ENCODE measurements at regions of chr14 and their contacts with region 1.

Region 1: GRCh38 chr14:38721822-38722431 is 381.1 kb downstream of the SEC23A start:
- DNase-seq: peak; percentile 81
- H3K4me3 Mint-ChIP-seq: no peak overlapping the region
- H3K27ac Mint-ChIP-seq: no peak overlapping the region
- H3K4me1 Mint-ChIP-seq: no peaks in the 10 kb centered on the region
- H3K27me3 Mint-ChIP-seq: no peaks in the 10 kb centered on the region

Region 2: GRCh38 chr14:36941783-36942521 is 1780.0 kb before region 1 on chr14:
- intact Hi-C with region 1: no loop called
- DNase-seq: peak; percentile 83
- H3K4me3 Mint-ChIP-seq: no peak overlapping the region
- H3K27ac Mint-ChIP-seq: no peak overlapping the region
- H3K4me1 Mint-ChIP-seq: no peaks in the 10 kb centered on the region
- H3K27me3 Mint-ChIP-seq: no peaks in the 10 kb centered on the region

Region 3: GRCh38 chr14:38867561-38868150 is 145.7 kb after region 1 on chr14:
- intact Hi-C with region 1: loop called (anchors 1 kb)
- DNase-seq: peak; percentile 84
- H3K4me3 Mint-ChIP-seq: no peak overlapping the region
- H3K27ac Mint-ChIP-seq: no peak overlapping the region
- H3K4me1 Mint-ChIP-seq: no peaks in the 10 kb centered on the region
- H3K27me3 Mint-ChIP-seq: peaks cover 2% of the 10 kb centered on the region

Region 4: DNA sequence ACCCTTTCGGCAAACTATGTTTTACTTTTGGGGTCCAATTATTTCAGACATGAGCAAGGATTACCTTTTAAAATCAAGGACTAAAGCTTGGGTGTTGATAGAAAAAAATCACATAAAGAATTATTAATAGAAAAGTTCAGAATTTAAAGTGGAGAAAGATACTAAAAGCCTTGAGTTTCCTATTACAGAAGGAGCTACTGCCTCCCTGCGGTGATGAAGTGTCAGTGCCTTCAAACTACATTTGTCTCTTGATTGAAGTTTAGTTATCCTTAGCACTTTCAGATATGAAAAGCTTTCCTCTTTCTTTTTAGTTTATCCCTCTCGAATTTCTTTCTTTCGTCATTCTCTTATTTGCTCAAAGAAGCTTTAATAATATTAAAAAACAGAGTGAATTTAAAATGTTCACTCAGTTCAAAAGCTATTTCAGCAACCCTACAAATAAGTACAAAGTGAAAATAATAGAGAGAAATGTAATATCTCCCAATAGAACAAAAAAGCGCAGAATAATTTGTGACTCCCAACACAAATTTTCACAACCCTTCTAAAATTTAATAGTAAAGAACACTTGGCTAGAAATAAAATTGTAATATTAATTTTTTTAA is 293.5 kb after region 1 on chr14:
- intact Hi-C with region 1: loop called (anchors 1 kb)
- DNase-seq: peak; percentile 69
- H3K4me3 Mint-ChIP-seq: no peak overlapping the region
- H3K27ac Mint-ChIP-seq: no peak overlapping the region
- H3K4me1 Mint-ChIP-seq: no peaks in the 10 kb centered on the region
- H3K27me3 Mint-ChIP-seq: no peaks in the 10 kb centered on the region

Measured in activated CD4-positive, alpha-beta T cell treated with anti-CD3 and anti-CD28 coated beads, Interleukin-2, amount 10 ng/mL, durations not matched to agents 24 days and 14 days (primary cell).